Gastrocnemius medialis (tissue), 4 donors: ENCODE measurements at regions of chr12 and their contacts with region 1.

Region 1: DNA sequence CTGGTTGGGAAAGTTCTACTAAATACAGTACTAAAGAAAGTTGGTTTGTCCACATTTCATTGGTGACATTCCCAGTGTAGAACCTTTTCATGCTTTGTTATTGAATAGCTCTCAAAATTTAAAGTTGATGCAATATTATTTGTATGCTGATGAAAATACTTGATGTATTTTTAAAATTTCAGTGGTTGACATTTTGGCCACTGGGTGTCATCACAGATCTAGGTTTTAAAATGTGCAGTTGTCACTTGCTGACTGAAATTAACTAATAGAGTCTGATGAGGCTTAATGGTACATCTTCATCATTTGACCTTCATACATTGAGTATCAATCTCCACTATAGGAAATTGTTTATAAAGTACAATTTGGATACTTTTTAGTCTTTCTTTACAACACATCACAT is 37.1 kb downstream of the CMAS start:
- DNase-seq: no peak
- ATAC-seq: no peak
- H3K4me3 ChIP-seq: no peak overlapping the region
- H3K27ac ChIP-seq: no peak overlapping the region
- H3K4me1 ChIP-seq: no peaks in the 10 kb centered on the region
- H3K27me3 ChIP-seq: no peaks in the 10 kb centered on the region
- CTCF ChIP-seq: peak in 3 of 5 experiments; percentile 25 to 44 (median 39)
- POLR2A ChIP-seq: no peak

Region 2: GRCh38 chr12:21818627-21819026 is 264.5 kb before region 1 on chr12:
- in situ Hi-C with region 1: no loop called
- intact Hi-C with region 1: no loop called
- DNase-seq: no peak
- ATAC-seq: peak; percentile 39 to 60
- H3K4me3 ChIP-seq: no peak overlapping the region
- H3K27ac ChIP-seq: peak overlapping the region; percentile 70 to 87 (median 72)
- H3K4me1 ChIP-seq: peaks cover 55 to 64% of the 10 kb centered on the region in 2 donors
- H3K27me3 ChIP-seq: no peaks in the 10 kb centered on the region
- CTCF ChIP-seq: no peak
- POLR2A ChIP-seq: no peak

Region 3: DNA sequence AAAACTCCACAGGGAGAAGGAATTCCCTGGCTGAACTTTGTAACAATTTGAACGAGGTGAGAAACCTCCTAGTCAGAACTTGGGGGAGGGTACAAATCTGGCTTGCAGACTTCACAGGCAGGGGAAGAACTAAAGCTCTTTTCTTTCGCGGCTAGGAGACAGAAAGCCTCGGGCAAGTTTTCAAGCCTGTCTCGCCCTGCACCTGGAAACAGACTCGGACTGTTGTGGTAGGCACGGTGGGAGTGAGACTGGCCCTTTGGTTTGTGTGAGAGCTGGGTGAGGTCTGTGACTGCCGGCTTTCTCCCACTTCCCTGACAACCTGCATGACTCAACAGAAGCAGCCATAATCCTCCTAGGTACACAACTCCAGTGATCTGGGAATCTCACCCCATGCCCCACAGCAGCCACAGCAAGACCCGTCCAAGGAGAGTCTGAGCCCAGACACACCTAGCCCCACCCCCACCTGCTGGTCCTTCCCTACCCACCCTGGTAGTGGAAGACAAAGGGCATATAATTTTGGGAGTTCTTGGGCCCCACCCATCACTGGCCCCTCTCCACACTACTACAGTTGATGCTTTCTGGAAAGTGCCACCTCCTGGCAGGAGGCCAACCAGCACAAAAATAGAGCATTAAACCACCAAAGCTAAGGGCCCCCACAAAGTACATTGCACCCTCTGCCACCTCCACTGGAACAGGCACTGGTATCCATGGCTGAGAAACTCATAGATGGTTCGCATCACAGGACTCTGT is 354.0 kb after region 1 on chr12:
- in situ Hi-C with region 1: loop called in 2 of 4 experiments (anchors 10 to 25 kb)
- intact Hi-C with region 1: no loop called
- DNase-seq: no peak
- ATAC-seq: no peak
- H3K4me3 ChIP-seq: no peak overlapping the region
- H3K27ac ChIP-seq: no peak overlapping the region
- H3K4me1 ChIP-seq: no peaks in the 10 kb centered on the region
- H3K27me3 ChIP-seq: no peaks in the 10 kb centered on the region
- CTCF ChIP-seq: no peak
- POLR2A ChIP-seq: no peak

Region 4: GRCh38 chr12:22443379-22444316 is 360.5 kb after region 1 on chr12:
- in situ Hi-C with region 1: loop called in 2 of 4 experiments (anchors 10 to 25 kb)
- intact Hi-C with region 1: loop called (anchors 1 kb)
- DNase-seq: peak; percentile 29 to 38
- ATAC-seq: peak; percentile 83 to 93
- H3K4me3 ChIP-seq: no peak overlapping the region
- H3K27ac ChIP-seq: no peak overlapping the region
- H3K4me1 ChIP-seq: no peaks in the 10 kb centered on the region
- H3K27me3 ChIP-seq: no peaks in the 10 kb centered on the region
- CTCF ChIP-seq: peak; percentile 17 to 68 (median 63)
- POLR2A ChIP-seq: no peak

Region 5: DNA sequence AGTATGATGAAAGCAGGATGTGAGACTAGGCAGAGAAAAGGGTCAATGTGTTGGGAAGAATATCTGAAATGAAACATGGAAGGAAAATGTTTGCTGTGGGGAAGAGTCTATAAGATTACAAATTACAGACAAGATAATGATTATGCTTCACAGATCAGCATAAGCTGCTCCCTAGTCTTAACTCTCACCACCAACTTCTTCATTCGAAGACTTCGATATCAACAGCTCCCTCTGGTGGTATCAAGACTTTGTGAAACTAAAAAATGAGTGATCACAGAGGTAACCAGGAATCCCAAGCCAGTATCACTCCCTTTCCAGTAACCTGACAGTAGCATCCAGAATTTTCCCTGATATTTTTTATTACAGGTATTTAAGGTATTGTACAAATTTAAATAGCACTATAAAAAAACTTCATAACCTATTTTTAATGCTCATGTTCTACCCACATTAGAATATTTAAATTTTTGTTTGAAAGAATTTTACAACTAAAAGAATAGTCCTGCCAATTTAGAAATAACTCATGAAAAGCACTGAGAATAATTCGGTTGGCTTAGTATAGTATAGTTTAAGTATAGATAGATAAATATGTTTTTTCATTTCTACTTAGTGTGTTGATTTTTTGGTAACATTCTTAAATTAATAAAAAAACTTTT is 376.8 kb after region 1 on chr12:
- in situ Hi-C with region 1: no loop called
- intact Hi-C with region 1: loop called (anchors 5 kb)
- DNase-seq: no peak
- ATAC-seq: peak in 1 of 2 donors; percentile 33
- H3K4me3 ChIP-seq: no peak overlapping the region
- H3K27ac ChIP-seq: no peak overlapping the region
- H3K4me1 ChIP-seq: no peaks in the 10 kb centered on the region
- H3K27me3 ChIP-seq: no peaks in the 10 kb centered on the region
- CTCF ChIP-seq: peak in 4 of 5 experiments; percentile 26 to 48 (median 30)
- POLR2A ChIP-seq: no peak